ENCODE measurements at regions of chr11 and their contacts with region 1.

Region 1: DNA sequence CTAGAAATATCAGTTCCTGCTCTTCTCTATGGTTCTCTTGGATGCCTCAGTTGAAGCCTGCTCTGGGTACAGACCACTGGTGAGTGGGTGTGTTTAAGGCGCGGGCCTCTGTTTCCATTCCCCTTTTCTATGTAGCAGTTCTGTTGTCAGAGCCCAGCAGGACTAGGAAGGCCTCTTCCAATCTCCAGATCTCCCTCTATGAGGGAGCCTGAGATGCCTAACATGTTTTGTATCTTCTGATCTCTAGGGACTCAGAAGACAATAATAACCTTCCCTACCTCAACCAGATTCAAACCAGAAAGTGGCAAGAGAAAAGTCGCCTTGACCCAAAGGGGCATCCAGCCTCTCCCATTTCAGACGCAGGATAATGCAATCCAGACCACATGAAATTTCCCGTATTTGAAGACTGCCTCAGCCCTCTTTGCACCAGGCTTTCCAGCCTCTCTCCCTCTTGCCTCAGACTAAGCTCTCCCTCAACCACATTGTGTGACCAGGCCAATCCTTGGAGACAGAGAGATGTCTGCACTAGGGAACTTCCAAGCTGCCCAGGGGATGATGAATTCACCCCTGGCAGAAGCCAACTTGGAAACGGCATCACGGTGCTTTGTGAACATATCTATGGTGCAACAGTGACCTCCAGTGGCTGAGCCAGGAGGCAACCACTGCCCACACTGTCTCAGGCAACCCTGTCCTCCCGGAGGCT is 150.1 kb upstream of the UBASH3B start:
- DNase-seq: peak; percentile 7
- ATAC-seq: peak; percentile 97
- H3K4me3 ChIP-seq: no peak overlapping the region
- H3K27ac ChIP-seq: no peak overlapping the region
- H3K4me1 ChIP-seq: no peaks in the 10 kb centered on the region
- H3K27me3 ChIP-seq: no peaks in the 10 kb centered on the region
- CTCF ChIP-seq: peak; percentile 78 to 88 (median 84)
- EP300 ChIP-seq: no peak
- POLR2A ChIP-seq: no peak
- RAD21 ChIP-seq: peak; percentile 81

Region 2: GRCh38 chr11:122068141-122068540 is 437.3 kb before region 1 on chr11:
- CTCF ChIA-PET with region 1: no interaction called
- POLR2A ChIA-PET with region 1: no interaction called
- RAD21 ChIA-PET with region 1: no interaction called
- SMC1A ChIA-PET with region 1: no interaction called
- in situ Hi-C with region 1: no loop called
- intact Hi-C with region 1: no loop called
- DNase-seq: no peak
- ATAC-seq: no peak
- H3K4me3 ChIP-seq: no peak overlapping the region
- H3K27ac ChIP-seq: no peak overlapping the region
- H3K4me1 ChIP-seq: no peaks in the 10 kb centered on the region
- H3K27me3 ChIP-seq: no peaks in the 10 kb centered on the region; a peak in 1 of 4 replicates
- CTCF ChIP-seq: no peak
- EP300 ChIP-seq: no peak
- POLR2A ChIP-seq: no peak
- RAD21 ChIP-seq: no peak

Region 3: DNA sequence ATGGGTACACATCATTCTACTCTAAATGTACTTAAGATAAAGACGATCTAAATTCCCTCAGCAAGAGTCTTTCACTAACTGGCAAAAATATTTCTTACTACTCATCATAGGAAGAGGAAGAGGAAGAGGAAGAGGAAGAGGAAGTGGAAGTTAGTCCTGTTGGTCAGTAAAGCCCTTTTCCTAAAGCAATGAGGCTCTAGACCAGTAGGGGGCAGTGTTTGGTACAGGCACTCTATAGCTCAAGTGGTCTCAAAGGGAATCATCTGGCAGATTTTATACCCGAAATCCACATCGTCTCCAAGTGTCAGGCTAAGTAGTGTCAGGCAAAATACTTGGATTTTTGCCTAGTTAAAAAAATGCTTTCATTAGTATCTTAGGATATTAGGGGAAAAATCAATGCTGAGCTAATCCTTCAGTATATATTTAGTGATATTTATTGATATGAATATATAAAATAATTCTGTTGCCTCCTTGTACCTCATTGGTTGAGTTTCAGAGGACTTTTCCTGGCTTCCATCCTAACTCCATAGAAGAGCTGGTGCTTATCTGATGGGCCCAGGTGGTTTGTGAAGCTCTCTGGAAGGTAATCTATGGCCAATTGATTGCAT is 397.2 kb before region 1 on chr11:
- CTCF ChIA-PET with region 1: interaction called, 6 read pairs
- POLR2A ChIA-PET with region 1: no interaction called
- RAD21 ChIA-PET with region 1: no interaction called
- SMC1A ChIA-PET with region 1: interaction called, 4 read pairs
- in situ Hi-C with region 1: no loop called
- intact Hi-C with region 1: loop called (anchors 5 kb)
- DNase-seq: no peak
- ATAC-seq: peak; percentile 41; the same call in 1 of the 3 replicates
- H3K4me3 ChIP-seq: no peak overlapping the region
- H3K27ac ChIP-seq: no peak overlapping the region
- H3K4me1 ChIP-seq: no peaks in the 10 kb centered on the region
- H3K27me3 ChIP-seq: no peaks in the 10 kb centered on the region
- CTCF ChIP-seq: peak in 2 of 3 experiments; percentile 59 to 64; a peak in 5 of 6 replicates
- EP300 ChIP-seq: no peak
- POLR2A ChIP-seq: no peak
- RAD21 ChIP-seq: peak; percentile 21; the same call in 1 of the 2 replicates

Region 4: GRCh38 chr11:122293296-122294023 is 212.0 kb before region 1 on chr11:
- CTCF ChIA-PET with region 1: no interaction called
- POLR2A ChIA-PET with region 1: no interaction called
- RAD21 ChIA-PET with region 1: no interaction called
- SMC1A ChIA-PET with region 1: no interaction called
- in situ Hi-C with region 1: no loop called
- intact Hi-C with region 1: loop called (anchors 5 kb)
- DNase-seq: no peak
- ATAC-seq: no peak
- H3K4me3 ChIP-seq: no peak overlapping the region
- H3K27ac ChIP-seq: no peak overlapping the region
- H3K4me1 ChIP-seq: no peaks in the 10 kb centered on the region
- H3K27me3 ChIP-seq: no peaks in the 10 kb centered on the region
- CTCF ChIP-seq: no peak
- EP300 ChIP-seq: no peak
- POLR2A ChIP-seq: no peak
- RAD21 ChIP-seq: no peak

Region 5: DNA sequence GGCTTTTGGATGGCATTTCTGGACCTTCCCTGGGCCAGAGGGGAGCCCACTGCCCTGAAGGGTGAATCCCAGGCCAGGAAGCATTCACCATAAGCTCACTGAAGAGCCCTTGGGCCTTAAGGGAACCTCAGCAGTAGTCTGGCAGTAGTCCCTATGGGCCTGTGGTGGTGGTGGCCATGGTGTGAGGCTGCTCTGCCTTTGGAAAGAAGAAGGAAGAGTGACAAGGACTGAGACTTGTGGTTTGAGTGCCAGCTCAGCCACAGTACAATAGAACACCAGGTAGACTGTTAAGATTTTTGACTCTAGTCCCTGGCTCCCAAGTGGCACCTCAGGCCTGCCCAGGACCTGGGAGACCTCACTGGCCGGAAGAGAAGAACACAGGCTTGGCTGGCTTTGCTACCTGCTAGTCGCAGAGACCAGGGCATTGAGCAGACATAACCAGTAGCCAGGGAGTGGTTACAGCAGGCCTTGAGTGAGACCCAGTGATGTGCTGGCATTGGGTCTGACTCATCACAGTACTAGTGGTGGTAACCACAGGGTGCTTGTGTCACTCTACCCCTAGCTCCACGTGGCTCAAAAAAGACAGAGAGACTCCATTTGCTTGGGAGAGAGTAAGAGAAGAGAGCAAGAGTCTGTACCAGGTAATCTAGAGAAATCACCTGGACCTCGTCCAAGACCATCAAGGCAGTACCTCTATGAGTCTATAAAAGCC is 129.6 kb before region 1 on chr11:
- CTCF ChIA-PET with region 1: no interaction called
- POLR2A ChIA-PET with region 1: no interaction called
- RAD21 ChIA-PET with region 1: no interaction called
- SMC1A ChIA-PET with region 1: no interaction called
- in situ Hi-C with region 1: no loop called
- intact Hi-C with region 1: no loop called
- DNase-seq: peak; percentile 36
- ATAC-seq: peak; percentile 73
- H3K4me3 ChIP-seq: no peak overlapping the region
- H3K27ac ChIP-seq: no peak overlapping the region
- H3K4me1 ChIP-seq: no peaks in the 10 kb centered on the region
- H3K27me3 ChIP-seq: no peaks in the 10 kb centered on the region
- CTCF ChIP-seq: no peak
- EP300 ChIP-seq: no peak
- POLR2A ChIP-seq: no peak
- RAD21 ChIP-seq: no peak

Region 6: GRCh38 chr11:122478986-122479385 is 26.5 kb before region 1 on chr11:
- CTCF ChIA-PET with region 1: no interaction called
- POLR2A ChIA-PET with region 1: no interaction called
- RAD21 ChIA-PET with region 1: no interaction called
- SMC1A ChIA-PET with region 1: no interaction called
- in situ Hi-C with region 1: no loop called
- intact Hi-C with region 1: no loop called
- DNase-seq: no peak
- ATAC-seq: no peak
- H3K4me3 ChIP-seq: no peak overlapping the region
- H3K27ac ChIP-seq: no peak overlapping the region
- H3K4me1 ChIP-seq: no peaks in the 10 kb centered on the region
- H3K27me3 ChIP-seq: no peaks in the 10 kb centered on the region
- CTCF ChIP-seq: no peak
- EP300 ChIP-seq: no peak
- POLR2A ChIP-seq: no peak
- RAD21 ChIP-seq: no peak

Region 7: GRCh38 chr11:122538060-122538459 is 32.6 kb after region 1 on chr11:
- CTCF ChIA-PET with region 1: no interaction called
- POLR2A ChIA-PET with region 1: no interaction called
- RAD21 ChIA-PET with region 1: no interaction called
- SMC1A ChIA-PET with region 1: no interaction called
- in situ Hi-C with region 1: no loop called
- intact Hi-C with region 1: no loop called
- DNase-seq: no peak
- ATAC-seq: no peak
- H3K4me3 ChIP-seq: no peak overlapping the region
- H3K27ac ChIP-seq: no peak overlapping the region
- H3K4me1 ChIP-seq: no peaks in the 10 kb centered on the region
- H3K27me3 ChIP-seq: no peaks in the 10 kb centered on the region
- CTCF ChIP-seq: no peak
- EP300 ChIP-seq: no peak
- POLR2A ChIP-seq: no peak
- RAD21 ChIP-seq: no peak

Measured in GM12878 (cell line).